HepG2 (cell line): ENCODE measurements at regions of chr2 and their contacts with region 1.

Region 1: DNA sequence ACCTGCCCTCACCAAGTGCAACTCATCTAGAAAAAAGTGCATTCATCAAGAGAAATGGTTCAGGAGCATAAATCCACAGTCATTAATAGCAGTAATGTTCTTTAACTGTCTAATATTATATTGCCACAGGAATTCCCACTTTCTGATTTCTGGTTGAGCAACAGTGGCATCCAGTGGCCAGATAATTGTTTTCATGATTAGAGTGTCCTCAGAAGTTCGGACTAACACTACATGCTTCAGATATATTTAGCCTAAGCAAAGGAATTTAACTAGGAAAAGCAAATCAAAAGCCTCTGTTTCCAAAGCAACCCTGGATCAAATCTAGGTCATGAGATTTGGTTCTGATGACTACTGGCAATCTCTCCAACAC is 9.8 kb upstream of the ERBB4 start:
- DNase-seq: peak; percentile 42
- ATAC-seq: peak; percentile 79
- H3K4me3 ChIP-seq: no peak overlapping the region
- H3K27ac ChIP-seq: no peak overlapping the region
- H3K4me1 ChIP-seq: no peaks in the 10 kb centered on the region
- H3K27me3 ChIP-seq: no peaks in the 10 kb centered on the region
- CTCF ChIP-seq: peak; percentile 61
- EP300 ChIP-seq: no peak
- POLR2A ChIP-seq: no peak
- RAD21 ChIP-seq: no peak

Region 2: GRCh38 chr2:211455216-211455841 is 1093.1 kb before region 1 on chr2:
- CTCF ChIA-PET with region 1: no interaction called
- POLR2A ChIA-PET with region 1: no interaction called
- in situ Hi-C with region 1: no loop called
- intact Hi-C with region 1: loop called (anchors 5 kb)
- DNase-seq: peak; percentile 49
- ATAC-seq: peak; percentile 87
- H3K4me3 ChIP-seq: no peak overlapping the region
- H3K27ac ChIP-seq: no peak overlapping the region
- H3K4me1 ChIP-seq: no peaks in the 10 kb centered on the region
- H3K27me3 ChIP-seq: no peaks in the 10 kb centered on the region
- CTCF ChIP-seq: peak; percentile 77
- EP300 ChIP-seq: no peak
- POLR2A ChIP-seq: no peak
- RAD21 ChIP-seq: no peak

Region 3: GRCh38 chr2:212147921-212148513 is 400.4 kb before region 1 on chr2:
- CTCF ChIA-PET with region 1: interaction called, 8 read pairs
- POLR2A ChIA-PET with region 1: no interaction called
- in situ Hi-C with region 1: loop called (anchors 10 kb)
- intact Hi-C with region 1: loop called (anchors 1 kb)
- DNase-seq: peak; percentile 12
- ATAC-seq: no peak
- H3K4me3 ChIP-seq: no peak overlapping the region
- H3K27ac ChIP-seq: no peak overlapping the region
- H3K4me1 ChIP-seq: no peaks in the 10 kb centered on the region
- H3K27me3 ChIP-seq: no peaks in the 10 kb centered on the region
- CTCF ChIP-seq: peak; percentile 37
- EP300 ChIP-seq: no peak
- POLR2A ChIP-seq: no peak
- RAD21 ChIP-seq: no peak

Region 4: GRCh38 chr2:212536817-212537725 is 11.4 kb before region 1 on chr2:
- CTCF ChIA-PET with region 1: no interaction called
- POLR2A ChIA-PET with region 1: no interaction called
- in situ Hi-C with region 1: no loop called
- intact Hi-C with region 1: no loop called
- DNase-seq: no peak
- ATAC-seq: peak; percentile 69
- H3K4me3 ChIP-seq: peak overlapping the region; percentile 37 to 65 (median 61); a peak in 5 of 6 replicates
- H3K27ac ChIP-seq: no peak overlapping the region
- H3K4me1 ChIP-seq: peaks cover 20% of the 10 kb centered on the region
- H3K27me3 ChIP-seq: peaks cover 5 to 45% of the 10 kb centered on the region in 2 experiments; a peak in 4 of 5 replicates
- CTCF ChIP-seq: no peak
- EP300 ChIP-seq: no peak
- POLR2A ChIP-seq: no peak
- RAD21 ChIP-seq: no peak